Mammary epithelial cell (primary cell): ENCODE measurements at regions of chr1 and their contacts with region 1.

Region 1: GRCh38 chr1:175221666-175222175 is 29.1 kb upstream of the KIAA0040 start:
- DNase-seq: peak; percentile 88
- H3K4me3 ChIP-seq: peak overlapping the region in 1 of 3 experiments; percentile 14
- H3K27ac ChIP-seq: peak overlapping the region; percentile 78
- H3K4me1 ChIP-seq: peaks cover 46% of the 10 kb centered on the region
- H3K27me3 ChIP-seq: no peaks in the 10 kb centered on the region
- CTCF ChIP-seq: peak; percentile 35 to 64

Region 2: GRCh38 chr1:175174309-175175165 is 47.2 kb before region 1 on chr1:
- CTCF ChIA-PET with region 1: interaction called, 3 read pairs
- dilution Hi-C with region 1: no loop called
- in situ Hi-C with region 1: loop called in 1 of 2 experiments (anchors 10 kb)
- intact Hi-C with region 1: no loop called
- DNase-seq: no peak
- H3K4me3 ChIP-seq: no peak overlapping the region
- H3K27ac ChIP-seq: no peak overlapping the region
- H3K4me1 ChIP-seq: peaks cover 33% of the 10 kb centered on the region
- H3K27me3 ChIP-seq: no peaks in the 10 kb centered on the region
- CTCF ChIP-seq: no peak

Region 3: GRCh38 chr1:175267716-175268384 is 46.1 kb after region 1 on chr1:
- CTCF ChIA-PET with region 1: no interaction called
- dilution Hi-C with region 1: no loop called
- in situ Hi-C with region 1: no loop called
- intact Hi-C with region 1: loop called (anchors 2 kb)
- DNase-seq: peak; percentile 17
- H3K4me3 ChIP-seq: no peak overlapping the region
- H3K27ac ChIP-seq: peak overlapping the region; percentile 79
- H3K4me1 ChIP-seq: peaks cover 30% of the 10 kb centered on the region
- H3K27me3 ChIP-seq: no peaks in the 10 kb centered on the region
- CTCF ChIP-seq: no peak

Region 4: GRCh38 chr1:175319418-175320230 is 97.9 kb after region 1 on chr1:
- CTCF ChIA-PET with region 1: no interaction called
- dilution Hi-C with region 1: no loop called
- in situ Hi-C with region 1: no loop called
- intact Hi-C with region 1: loop called (anchors 1 kb)
- DNase-seq: peak; percentile 51
- H3K4me3 ChIP-seq: no peak overlapping the region
- H3K27ac ChIP-seq: no peak overlapping the region
- H3K4me1 ChIP-seq: peaks cover 7% of the 10 kb centered on the region
- H3K27me3 ChIP-seq: no peaks in the 10 kb centered on the region
- CTCF ChIP-seq: peak; percentile 83 to 96